ENCODE measurements at regions of chr2 and their contacts with region 1.

Region 1: DNA sequence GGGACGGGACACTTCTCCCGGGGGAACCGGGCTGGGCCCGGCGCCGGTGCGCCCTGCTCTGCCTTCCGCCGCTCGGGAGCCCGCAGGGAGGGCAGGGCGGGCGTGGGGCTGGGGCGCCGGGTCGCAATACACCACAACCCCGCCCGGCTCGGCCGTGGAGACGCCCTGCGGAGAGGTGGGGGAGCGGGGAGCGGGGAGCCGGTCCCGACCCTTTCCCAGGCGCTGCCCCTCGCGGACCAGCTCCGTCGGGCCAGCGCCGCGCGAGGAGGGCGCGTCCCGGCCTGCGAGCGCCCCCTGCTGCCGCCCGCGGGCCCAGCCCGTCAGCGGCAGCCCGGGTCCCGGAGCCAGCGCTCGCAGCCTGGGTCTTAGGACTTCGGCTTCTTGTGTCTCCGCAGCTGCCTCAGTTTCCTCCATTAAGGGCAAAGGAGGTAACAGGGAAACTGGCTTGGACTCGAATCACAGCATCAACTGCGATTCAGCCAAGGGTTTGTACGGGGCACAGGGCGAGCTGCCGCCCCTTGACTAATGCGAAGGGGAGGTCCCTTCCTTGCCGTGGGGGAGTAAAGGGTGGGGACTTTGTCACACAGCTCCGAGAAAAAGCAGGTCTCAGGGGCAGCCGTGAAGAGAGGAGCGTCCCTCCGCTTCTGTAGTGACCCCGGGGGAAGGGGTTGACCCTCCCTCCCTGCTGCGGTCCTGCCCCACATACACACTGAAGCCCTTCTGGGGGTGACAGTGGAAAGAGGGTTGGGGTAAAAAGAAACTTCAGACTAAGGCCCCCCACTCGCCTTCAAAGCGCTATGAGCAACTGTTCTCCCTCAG is 717 bp upstream of the ADRA2B start:
- DNase-seq: peak; percentile 68
- H3K4me3 ChIP-seq: peak overlapping the region; percentile 52
- H3K27ac ChIP-seq: no peak overlapping the region
- H3K4me1 ChIP-seq: no peaks in the 10 kb centered on the region
- H3K27me3 ChIP-seq: peaks cover 3% of the 10 kb centered on the region
- CTCF ChIP-seq: peak; percentile 68

Region 2: DNA sequence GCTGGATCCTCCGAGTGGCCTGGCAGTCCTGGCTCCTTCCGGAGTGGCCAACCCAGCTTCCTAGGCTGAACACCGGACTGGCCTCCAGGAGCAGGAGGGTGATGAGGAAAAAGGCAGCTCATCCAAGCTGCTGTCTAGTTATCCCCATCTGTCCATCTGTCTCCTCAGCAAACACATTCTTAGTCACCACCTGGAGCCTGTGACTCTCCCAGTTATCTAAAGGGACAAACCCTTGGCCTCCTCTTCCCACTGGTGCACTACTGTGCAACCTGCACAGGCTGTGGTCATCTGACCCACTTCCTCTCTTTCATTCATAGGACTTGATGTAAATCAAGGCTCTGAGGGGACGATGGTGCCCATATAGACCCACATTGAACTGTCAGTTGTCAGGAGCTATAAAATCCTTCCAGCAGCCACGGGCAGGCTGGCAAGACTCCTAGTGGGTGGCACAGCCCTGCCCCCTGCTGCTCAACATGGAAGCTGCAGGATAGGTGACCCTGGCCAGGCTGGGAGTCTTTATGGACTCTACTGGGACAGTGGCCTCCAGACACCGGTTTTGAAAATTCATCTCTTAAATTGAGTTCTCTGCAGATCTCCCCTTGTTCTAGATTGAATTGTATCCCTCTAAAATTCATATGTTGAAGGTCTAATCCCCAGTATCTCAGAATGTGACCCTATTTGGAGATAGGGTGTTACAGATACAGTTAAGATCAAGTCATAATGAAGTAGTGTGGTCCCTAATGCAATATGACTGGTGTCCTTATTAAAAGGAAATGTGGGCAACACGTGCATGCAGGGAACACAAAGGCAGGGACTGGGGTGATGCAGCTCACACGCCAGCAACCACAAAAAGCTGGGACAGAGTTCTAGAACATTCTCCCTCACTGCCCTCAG is 57.4 kb after region 1 on chr2:
- CTCF ChIA-PET with region 1: interaction called, 3 read pairs
- POLR2A ChIA-PET with region 1: no interaction called
- intact Hi-C with region 1: loop called (anchors 10 kb)
- DNase-seq: peak; percentile 78
- H3K4me3 ChIP-seq: no peak overlapping the region
- H3K27ac ChIP-seq: no peak overlapping the region
- H3K4me1 ChIP-seq: peaks cover under 1% of the 10 kb centered on the region
- H3K27me3 ChIP-seq: no peaks in the 10 kb centered on the region
- CTCF ChIP-seq: peak; percentile 91

Region 3: GRCh38 chr2:96756788-96757479 is 639.8 kb after region 1 on chr2:
- CTCF ChIA-PET with region 1: no interaction called
- POLR2A ChIA-PET with region 1: no interaction called
- intact Hi-C with region 1: no loop called
- DNase-seq: no peak
- H3K4me3 ChIP-seq: no peak overlapping the region
- H3K27ac ChIP-seq: no peak overlapping the region
- H3K4me1 ChIP-seq: peaks cover 12% of the 10 kb centered on the region
- H3K27me3 ChIP-seq: no peaks in the 10 kb centered on the region
- CTCF ChIP-seq: no peak

Measured in A673 (cell line).